MCF 10A (cell line): ENCODE measurements at regions of chr6 and their contacts with region 1.

Region 1: DNA sequence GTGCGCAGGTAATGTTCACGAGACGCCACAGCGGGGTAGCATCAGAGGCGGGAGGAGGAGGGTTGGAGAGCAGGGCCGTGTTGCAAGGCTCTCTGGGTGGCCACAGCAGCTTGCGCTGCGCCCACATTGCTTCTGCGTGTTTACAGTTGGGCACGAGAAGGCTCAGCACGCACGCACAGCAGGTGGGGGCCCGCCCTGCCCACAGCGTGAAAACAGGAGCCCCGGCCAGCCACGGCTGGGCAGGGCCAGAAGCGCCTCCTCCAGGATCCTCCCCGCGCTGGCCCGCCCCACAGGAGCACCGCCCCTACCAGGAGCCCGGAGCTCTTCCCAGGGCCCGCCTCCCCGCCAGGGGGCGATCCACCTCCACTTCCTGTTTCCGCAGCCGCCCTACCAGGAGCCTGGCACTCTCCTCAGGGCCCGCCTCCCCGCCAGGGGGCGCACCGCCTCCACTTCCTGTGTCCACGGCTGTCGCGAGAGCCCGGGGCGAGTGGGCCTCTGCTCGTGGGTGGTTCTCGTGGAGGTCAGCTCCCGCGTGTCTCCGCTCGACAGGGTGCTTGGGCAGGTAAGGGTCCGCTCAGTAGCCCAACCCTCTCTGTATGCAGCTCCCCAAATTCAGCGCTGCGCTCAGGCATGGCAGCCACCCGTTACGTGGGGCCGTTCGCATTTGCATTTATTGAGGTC is at the start of gene FAM50B:
- DNase-seq: peak; percentile 84
- H3K4me3 Mint-ChIP-seq: peak within 1 kb of the TSS; percentile 75
- H3K27ac Mint-ChIP-seq: peak within 1 kb of the TSS; percentile 95
- H3K4me1 Mint-ChIP-seq: peaks cover 17% of the 10 kb centered on the region
- H3K27me3 Mint-ChIP-seq: no peaks in the 10 kb centered on the region
- CTCF ChIP-seq: peak; percentile 76
- total RNA-seq, gene FAM50B: 4.0 and 4.3 TPM in 2 replicates

Region 2: DNA sequence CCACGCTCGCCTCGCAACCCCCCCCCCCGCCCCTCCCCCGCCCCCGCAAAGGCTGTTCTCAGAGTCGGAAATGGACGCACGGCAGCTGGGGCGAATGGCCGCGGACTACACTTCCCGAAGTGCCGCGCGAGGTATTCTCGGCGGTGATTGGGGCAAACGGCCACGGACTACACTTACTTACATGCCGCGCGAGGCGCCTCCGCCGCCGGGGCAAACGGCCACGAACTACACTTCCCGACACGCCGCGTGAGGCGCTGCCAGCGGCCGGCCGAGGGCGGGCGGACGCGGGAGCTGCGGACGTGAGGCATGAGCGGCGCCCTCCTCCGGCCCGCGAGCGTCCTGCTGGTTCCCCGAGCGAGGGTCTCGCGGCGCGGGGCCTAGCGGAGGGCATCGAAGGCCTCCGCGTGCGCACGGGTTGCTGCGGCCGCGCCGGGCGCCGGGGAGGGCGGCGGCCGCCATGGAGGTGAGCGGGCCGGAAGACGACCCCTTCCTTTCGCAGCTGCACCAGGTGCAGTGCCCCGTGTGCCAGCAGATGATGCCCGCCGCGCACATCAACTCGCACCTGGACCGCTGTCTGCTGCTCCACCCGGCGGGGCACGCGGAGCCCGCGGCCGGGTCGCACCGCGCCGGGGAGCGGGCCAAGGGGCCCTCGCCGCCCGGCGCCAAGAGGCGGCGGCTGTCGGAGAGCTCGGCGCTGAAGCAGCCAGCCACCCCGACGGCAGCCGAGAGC is 1083.7 kb before region 1 on chr6 and contains the start of gene WRNIP1:
- CTCF ChIA-PET with region 1: no interaction called
- POLR2A ChIA-PET with region 1: no interaction called
- intact Hi-C with region 1: no loop called
- DNase-seq: peak; percentile 98
- H3K4me3 Mint-ChIP-seq: peak within 1 kb of the TSS; percentile 71
- H3K27ac Mint-ChIP-seq: peak within 1 kb of the TSS; percentile 98
- H3K4me1 Mint-ChIP-seq: peaks cover 24% of the 10 kb centered on the region
- H3K27me3 Mint-ChIP-seq: no peaks in the 10 kb centered on the region
- CTCF ChIP-seq: peak; percentile 43
- total RNA-seq, gene WRNIP1: 33.4 and 44.8 TPM in 2 replicates

Region 3: GRCh38 chr6:3281631-3282475 is 567.2 kb before region 1 on chr6:
- CTCF ChIA-PET with region 1: interaction called, 5 read pairs
- POLR2A ChIA-PET with region 1: no interaction called
- intact Hi-C with region 1: loop called (anchors 1 kb)
- DNase-seq: peak; percentile 94
- H3K4me3 Mint-ChIP-seq: no peak overlapping the region
- H3K27ac Mint-ChIP-seq: no peak overlapping the region
- H3K4me1 Mint-ChIP-seq: peaks cover 11% of the 10 kb centered on the region
- H3K27me3 Mint-ChIP-seq: no peaks in the 10 kb centered on the region
- CTCF ChIP-seq: no peak

Region 4: DNA sequence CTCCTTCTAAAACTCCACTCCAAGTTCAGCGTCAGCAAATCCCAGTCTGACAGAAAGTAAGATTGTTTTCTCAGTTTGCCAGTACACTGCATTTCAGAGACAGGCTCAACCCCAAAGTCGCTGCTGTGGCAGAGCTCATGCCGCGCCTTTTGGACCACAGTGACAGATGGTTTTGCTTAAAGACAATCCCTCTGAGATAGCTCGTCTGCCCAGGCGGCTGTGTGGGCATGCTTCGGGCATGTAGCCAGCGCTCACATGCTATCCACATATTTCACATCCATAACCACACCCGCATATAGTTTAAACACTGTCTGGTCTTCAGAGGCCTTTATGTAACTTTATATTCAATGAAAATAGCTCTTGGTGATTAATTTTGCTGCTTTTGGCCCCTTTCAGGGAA is 82.9 kb before region 1 on chr6:
- CTCF ChIA-PET with region 1: interaction called, 3 read pairs
- POLR2A ChIA-PET with region 1: interaction called, 10 read pairs
- intact Hi-C with region 1: no loop called
- DNase-seq: peak; percentile 40
- H3K4me3 Mint-ChIP-seq: no peak overlapping the region
- H3K27ac Mint-ChIP-seq: peak overlapping the region; percentile 9
- H3K4me1 Mint-ChIP-seq: peaks cover 29% of the 10 kb centered on the region
- H3K27me3 Mint-ChIP-seq: no peaks in the 10 kb centered on the region
- CTCF ChIP-seq: no peak

Region 5: DNA sequence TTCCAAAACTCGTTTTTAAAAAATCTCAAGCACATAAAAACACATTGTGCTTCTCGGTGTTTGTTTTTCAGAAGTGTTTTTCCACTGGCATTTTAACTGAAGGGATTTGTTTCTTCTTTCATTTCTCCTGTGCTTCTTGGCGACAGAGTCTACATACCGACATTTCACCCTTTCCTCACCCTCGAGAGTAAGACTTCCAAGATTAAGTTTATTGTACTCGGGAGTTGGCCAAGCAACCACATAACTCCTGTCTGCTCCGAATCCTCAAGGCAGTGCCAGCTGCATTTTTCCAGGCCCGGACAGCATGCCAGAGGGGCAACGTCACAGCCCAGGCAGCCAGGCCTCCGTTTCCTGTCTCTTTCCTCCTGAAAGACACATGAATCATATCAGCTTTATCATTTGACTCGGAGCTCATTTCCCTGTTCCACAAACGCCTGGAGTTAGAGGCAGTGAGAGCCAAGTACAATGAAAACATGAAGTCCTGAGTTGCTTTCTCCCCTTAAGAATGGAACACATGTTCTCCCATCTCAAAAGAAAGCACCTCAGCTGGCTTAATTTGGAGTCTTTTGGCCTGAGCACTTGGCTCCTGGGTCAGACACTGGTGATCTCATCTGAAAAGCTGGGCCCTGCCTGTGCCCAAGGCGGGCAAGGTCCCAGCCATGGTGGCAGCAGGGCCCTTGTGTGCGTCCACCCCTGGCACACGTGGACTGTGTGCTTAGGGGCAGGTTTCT is 23.0 kb before region 1 on chr6:
- CTCF ChIA-PET with region 1: interaction called, 13 read pairs
- POLR2A ChIA-PET with region 1: interaction called, 17 read pairs
- intact Hi-C with region 1: loop called (anchors 1 kb)
- DNase-seq: peak; percentile 94
- H3K4me3 Mint-ChIP-seq: peak overlapping the region; percentile 66
- H3K27ac Mint-ChIP-seq: peak overlapping the region; percentile 92
- H3K4me1 Mint-ChIP-seq: peaks cover 35% of the 10 kb centered on the region
- H3K27me3 Mint-ChIP-seq: no peaks in the 10 kb centered on the region
- CTCF ChIP-seq: no peak

Region 6: DNA sequence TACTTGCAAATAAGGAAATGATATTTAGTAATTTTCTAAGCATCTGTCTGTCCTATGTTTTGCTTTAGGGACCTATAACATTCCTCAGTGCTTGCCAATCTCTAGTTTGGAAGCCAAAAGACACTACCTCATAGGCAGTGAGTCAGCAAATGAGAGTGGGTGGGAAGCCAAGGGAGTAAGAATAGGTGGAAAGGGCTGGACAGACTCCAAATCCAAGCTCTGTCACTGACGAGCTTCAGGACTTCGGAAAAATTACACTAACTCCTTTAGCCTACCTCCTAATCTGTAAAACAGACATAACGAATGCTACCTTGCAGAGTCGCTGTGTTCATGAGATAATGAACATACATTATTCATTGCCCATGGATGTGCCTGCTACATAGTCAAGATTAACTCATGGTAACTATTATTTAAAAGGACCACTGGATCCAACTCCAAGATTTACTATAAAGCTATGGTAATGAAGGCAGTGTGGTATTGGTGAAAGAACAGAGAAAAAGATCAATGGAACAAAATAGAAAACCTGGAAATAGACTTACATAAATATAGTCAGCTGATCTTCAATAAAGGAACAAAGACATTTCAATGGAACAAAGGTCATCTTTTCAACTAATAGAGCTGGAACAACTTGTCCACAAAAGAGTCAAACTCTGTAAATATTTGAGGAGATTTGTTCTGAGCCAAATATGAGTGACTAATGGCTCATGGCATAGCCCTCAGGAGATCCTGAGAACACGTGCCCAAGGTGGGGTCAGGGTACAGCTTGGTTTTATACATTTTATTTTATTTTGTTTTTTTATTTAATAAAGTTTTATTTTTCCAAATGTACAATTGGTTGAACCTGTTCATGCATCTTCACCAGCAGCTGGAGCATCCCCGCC is 64.3 kb after region 1 on chr6:
- CTCF ChIA-PET with region 1: interaction called, 21 read pairs
- POLR2A ChIA-PET with region 1: interaction called, 34 read pairs
- intact Hi-C with region 1: loop called (anchors 1 kb)
- DNase-seq: peak; percentile 99
- H3K4me3 Mint-ChIP-seq: peak overlapping the region; percentile 41
- H3K27ac Mint-ChIP-seq: peak overlapping the region; percentile 93
- H3K4me1 Mint-ChIP-seq: peaks cover 48% of the 10 kb centered on the region
- H3K27me3 Mint-ChIP-seq: no peaks in the 10 kb centered on the region
- CTCF ChIP-seq: no peak

Region 7: DNA sequence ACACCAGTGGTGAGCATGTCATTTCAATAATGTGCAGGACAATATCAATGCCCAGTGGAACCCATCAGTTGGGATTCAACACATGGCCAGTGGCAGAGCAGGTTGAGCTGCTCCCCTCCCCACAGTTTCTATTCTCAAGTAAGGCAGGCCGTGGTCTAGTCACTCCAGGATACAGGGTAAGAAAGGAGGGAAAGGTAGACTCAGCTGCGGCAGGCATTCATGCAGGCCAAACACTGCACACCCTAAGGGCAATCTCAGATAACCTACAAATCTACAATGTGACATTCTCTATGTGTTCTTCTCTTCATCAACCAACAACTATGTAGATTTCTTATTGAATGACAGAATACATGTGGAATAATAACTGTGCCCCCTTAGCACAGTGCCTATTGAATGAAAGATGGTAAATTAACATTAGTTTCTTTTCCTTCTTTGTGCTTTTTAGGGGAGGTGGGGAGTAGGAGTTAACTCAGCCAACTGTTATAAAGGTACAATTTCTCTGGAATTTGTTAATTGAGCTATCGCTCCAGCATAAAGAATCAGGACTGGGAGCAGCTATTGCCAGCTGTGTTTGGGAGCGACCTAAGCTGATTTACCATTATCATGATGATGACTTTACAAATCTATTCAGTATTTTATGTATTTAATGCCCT is 89.8 kb after region 1 on chr6:
- CTCF ChIA-PET with region 1: interaction called, 58 read pairs
- POLR2A ChIA-PET with region 1: interaction called, 15 read pairs
- intact Hi-C with region 1: no loop called
- DNase-seq: no peak
- H3K4me3 Mint-ChIP-seq: no peak overlapping the region
- H3K27ac Mint-ChIP-seq: no peak overlapping the region
- H3K4me1 Mint-ChIP-seq: no peaks in the 10 kb centered on the region
- H3K27me3 Mint-ChIP-seq: no peaks in the 10 kb centered on the region
- CTCF ChIP-seq: no peak

Region 8: DNA sequence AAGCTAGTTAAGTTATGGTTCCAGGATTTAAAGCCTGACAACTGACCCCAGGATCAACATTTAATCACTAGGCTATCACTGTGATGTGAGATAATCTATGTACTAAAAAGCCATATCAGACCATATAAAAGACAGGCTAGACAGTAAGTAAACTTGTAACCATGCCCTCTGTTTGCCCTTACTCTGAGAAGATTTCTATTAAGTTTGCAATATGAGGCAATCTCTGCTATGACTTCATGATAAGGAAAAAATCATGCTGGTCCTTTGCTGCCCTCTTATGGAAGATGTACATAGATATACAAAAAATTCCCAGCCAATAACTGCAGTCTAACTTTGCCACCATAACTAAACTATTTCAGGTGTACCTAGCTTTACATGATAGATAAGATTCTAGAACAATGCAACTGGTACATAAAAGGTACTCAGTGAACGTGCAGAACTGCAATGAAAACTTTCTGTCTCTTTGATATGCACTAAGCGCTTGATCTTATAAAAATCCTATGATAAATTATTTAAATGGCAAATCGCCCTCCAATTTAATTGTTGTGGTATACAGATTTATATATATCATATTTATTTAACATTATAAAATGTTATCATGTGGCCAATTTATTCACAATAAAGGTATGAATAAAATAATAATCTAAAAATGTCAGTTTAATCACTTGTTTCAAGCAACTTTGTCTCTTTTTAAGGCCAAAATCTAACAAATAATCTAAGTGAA is 159.4 kb after region 1 on chr6:
- CTCF ChIA-PET with region 1: interaction called, 16 read pairs
- POLR2A ChIA-PET with region 1: no interaction called
- intact Hi-C with region 1: loop called (anchors 1 kb)
- DNase-seq: peak; percentile 79
- H3K4me3 Mint-ChIP-seq: no peak overlapping the region
- H3K27ac Mint-ChIP-seq: no peak overlapping the region
- H3K4me1 Mint-ChIP-seq: peaks cover 17% of the 10 kb centered on the region
- H3K27me3 Mint-ChIP-seq: no peaks in the 10 kb centered on the region
- CTCF ChIP-seq: peak; percentile 55